ENCODE measurements at regions of chr2 and their contacts with region 1.

Region 1: DNA sequence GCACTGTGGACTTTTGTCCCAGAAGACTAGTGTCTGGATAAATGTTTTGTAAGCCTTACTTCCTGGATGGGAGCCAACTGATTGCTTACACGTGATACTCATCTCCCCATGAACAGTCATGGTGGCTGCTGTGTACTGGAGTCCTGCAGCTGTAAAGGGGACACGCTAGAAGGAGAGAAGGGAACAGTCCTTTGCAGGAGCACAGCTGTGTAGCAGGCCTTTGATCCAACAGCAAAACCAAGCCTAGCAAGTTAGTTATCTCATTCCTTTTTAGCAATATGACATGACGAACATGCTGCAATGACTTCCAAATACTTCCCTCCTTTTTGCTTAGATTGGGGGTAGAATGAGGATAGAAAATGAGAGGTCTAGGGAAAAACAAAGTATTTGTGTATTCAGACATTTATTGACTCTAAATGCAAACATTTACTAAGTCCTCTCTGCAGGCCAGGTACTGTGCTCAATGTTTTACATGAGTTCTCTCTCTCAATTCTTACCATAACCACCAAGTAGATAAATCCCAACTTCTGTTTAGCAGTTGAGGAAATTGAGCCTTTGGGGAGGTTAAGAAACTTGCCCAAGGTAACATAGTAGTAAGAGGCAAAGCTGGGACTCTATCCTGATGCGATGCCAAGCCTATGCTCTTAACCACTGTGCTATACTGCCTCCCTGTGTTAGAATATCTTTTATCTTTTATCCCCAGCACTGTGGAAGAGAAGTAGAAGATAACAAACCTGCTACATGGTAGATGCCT is 55.4 kb upstream of the CD28 start:
- DNase-seq: peak; percentile 44
- H3K4me3 Mint-ChIP-seq: peak overlapping the region; percentile 40
- H3K27ac Mint-ChIP-seq: peak overlapping the region; percentile 87
- H3K4me1 Mint-ChIP-seq: peaks cover 61% of the 10 kb centered on the region
- H3K27me3 Mint-ChIP-seq: no peaks in the 10 kb centered on the region
- CTCF ChIP-seq: peak; percentile 48

Region 2: DNA sequence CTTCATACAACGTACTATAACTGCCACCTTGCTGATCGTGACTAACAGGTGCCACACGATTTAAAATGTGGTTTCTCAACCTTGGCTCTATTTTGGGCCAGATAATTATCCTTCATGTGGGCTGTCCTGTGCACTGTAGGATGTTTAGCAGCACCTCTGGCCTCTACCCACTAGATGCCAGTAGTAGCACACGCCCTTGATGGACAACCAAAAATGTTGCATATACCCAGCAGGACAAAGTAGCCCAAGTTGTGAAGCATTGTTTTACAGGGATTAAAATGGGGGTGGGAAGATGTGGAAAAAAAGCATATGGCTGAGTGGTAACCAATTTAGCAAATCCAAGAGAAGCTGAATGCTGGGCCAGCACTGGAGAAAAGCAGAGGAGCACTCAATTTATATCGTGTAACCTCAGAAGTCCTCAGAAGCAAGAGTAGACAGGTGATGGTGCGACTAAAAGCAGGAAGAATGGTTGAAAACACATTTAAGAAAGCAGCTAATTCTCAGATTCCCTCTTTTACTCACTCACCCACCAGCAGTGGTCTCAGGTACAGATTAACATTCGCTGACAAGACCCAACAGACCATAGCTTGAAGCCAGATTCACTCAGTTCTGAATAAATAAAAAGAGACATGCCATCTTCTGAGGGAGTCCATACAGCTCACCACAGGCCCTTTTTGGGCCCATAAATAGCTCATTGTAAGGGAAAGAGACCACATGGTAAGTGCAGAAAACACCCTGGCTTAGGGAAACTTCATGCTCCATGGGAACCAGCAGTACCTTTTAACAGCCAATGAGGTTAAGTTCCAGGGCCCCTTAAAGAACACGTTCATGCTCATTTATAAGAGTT is 166.5 kb before region 1 on chr2:
- CTCF ChIA-PET with region 1: no interaction called
- intact Hi-C with region 1: loop called (anchors 1 kb)
- DNase-seq: peak; percentile 35
- H3K4me3 Mint-ChIP-seq: no peak overlapping the region
- H3K27ac Mint-ChIP-seq: peak overlapping the region; percentile 46
- H3K4me1 Mint-ChIP-seq: peaks cover 19% of the 10 kb centered on the region
- H3K27me3 Mint-ChIP-seq: no peaks in the 10 kb centered on the region
- CTCF ChIP-seq: peak; percentile 41

Region 3: DNA sequence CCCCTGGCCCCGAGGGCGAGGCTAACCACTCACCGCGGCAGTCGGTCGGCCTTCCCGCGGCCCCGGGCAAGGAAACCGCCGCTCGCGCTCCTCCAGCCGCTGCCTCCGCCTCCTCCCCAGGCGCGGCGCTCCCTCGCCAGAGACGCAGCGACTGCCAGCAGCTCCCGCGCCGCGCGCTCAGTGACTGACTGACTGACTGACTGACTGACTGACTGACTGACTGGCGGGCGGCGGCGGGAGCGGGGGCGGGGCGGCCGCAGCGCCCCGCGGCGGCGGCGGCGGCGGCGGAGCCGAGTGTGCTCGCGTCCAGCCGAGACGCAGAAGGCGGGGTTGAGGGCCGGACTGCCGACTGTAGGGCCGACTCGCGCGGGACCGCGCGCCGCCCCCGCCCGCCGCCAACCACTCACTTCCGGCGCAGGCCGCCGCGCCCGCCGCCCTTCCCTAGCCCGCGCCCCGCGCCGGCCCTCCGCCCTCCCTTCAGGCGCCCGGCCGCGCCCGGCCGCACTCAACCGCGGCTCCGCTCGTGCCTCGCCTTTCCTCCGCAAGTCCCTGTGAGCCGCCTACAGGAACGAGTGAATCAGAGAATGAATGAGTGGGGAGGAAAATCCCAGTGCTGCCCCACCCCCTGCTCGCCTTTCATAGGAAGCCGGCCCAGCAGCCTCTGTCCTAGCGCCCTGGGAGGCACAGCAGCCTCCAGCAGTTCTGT is 115.8 kb before region 1 on chr2 and contains the start of gene RAPH1:
- CTCF ChIA-PET with region 1: interaction called, 3 read pairs
- intact Hi-C with region 1: loop called (anchors 2 kb)
- DNase-seq: peak; percentile 88
- H3K4me3 Mint-ChIP-seq: peak within 1 kb of the TSS; percentile 93
- H3K27ac Mint-ChIP-seq: peak within 1 kb of the TSS; percentile 85
- H3K4me1 Mint-ChIP-seq: peaks cover 19% of the 10 kb centered on the region
- H3K27me3 Mint-ChIP-seq: no peaks in the 10 kb centered on the region
- CTCF ChIP-seq: no peak
- total RNA-seq, gene RAPH1: 126 and 141 TPM in 2 replicates

Region 4: DNA sequence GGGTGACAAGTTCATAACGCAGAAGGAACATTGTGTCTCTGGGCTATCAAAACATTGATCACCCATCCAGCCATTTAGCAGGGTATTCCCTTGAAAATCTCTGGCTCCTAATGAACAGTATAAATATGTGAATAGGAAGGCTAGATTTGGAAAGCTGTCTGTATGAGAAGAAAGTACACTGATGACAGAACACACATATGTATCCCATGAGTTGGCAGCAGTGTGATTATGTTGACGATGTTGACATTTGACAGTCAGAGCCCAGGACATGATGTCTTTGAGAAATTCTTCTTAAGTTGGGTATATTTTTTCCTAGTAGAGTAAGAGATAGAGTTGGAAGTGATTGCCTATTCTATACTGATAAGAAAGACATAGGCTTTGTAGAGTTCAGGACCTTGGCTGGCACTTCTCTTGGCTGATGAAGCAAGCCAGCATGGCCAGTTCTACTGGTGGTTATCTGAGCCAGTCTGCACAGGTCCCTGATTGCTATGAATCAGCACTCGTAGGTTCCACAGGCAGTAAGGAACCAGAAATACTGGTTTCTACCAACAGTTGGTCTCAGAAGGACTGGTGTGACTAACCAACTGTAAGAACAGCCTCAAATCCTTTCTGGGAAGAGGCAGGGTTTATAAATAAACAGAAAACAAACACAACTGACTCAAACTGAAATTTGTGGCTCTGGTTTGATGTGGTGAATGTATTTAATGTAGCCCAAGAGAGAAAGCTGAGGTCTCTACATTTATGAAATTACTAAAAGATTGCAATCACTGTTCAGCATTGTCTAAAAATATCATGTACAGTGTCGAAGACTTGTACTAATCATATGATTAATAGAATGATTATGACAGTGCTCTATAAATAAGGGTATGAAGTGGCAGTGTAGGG is 72.0 kb before region 1 on chr2:
- CTCF ChIA-PET with region 1: interaction called, 3 read pairs
- intact Hi-C with region 1: loop called (anchors 2 kb)
- DNase-seq: peak; percentile 79
- H3K4me3 Mint-ChIP-seq: peak overlapping the region; percentile 57
- H3K27ac Mint-ChIP-seq: peak overlapping the region; percentile 97
- H3K4me1 Mint-ChIP-seq: peaks cover 55% of the 10 kb centered on the region
- H3K27me3 Mint-ChIP-seq: no peaks in the 10 kb centered on the region
- CTCF ChIP-seq: no peak

Region 5: DNA sequence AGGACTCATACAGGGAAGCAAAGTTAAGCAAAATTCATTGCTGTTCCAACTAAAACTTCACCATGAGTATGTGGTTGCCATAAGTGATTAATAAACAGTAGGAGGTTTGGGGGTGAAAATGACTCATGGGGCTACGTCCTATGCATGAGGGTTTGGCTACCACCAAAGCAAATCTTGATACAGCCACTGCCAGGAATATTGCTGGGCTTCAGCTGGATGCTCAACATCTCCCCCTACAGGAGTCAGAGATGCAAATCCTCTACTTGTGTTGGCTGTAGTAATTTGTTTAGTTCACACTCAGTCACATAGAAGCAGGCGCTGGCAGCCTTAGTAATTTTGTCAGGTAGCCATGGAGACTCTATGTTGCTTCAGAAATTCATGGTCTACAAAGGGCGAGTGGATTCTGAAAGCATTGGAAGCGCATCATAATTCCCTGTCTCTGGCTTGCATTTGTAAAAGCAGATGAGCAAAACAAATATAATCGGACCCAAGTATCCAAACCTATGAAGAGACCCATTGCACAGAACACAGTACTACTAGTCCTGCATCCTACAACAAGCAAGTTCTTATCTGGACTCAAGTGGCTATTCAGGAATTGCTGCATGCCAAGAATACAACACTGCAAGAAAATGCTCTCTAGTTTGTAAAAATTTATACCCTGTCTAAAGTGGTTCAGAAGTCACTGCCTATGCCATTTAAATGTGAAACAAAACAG is 131.4 kb after region 1 on chr2:
- CTCF ChIA-PET with region 1: no interaction called
- intact Hi-C with region 1: loop called (anchors 1 kb)
- DNase-seq: peak; percentile 80
- H3K4me3 Mint-ChIP-seq: no peak overlapping the region
- H3K27ac Mint-ChIP-seq: peak overlapping the region; percentile 70
- H3K4me1 Mint-ChIP-seq: peaks cover 30% of the 10 kb centered on the region
- H3K27me3 Mint-ChIP-seq: no peaks in the 10 kb centered on the region
- CTCF ChIP-seq: peak; percentile 79

Region 6: DNA sequence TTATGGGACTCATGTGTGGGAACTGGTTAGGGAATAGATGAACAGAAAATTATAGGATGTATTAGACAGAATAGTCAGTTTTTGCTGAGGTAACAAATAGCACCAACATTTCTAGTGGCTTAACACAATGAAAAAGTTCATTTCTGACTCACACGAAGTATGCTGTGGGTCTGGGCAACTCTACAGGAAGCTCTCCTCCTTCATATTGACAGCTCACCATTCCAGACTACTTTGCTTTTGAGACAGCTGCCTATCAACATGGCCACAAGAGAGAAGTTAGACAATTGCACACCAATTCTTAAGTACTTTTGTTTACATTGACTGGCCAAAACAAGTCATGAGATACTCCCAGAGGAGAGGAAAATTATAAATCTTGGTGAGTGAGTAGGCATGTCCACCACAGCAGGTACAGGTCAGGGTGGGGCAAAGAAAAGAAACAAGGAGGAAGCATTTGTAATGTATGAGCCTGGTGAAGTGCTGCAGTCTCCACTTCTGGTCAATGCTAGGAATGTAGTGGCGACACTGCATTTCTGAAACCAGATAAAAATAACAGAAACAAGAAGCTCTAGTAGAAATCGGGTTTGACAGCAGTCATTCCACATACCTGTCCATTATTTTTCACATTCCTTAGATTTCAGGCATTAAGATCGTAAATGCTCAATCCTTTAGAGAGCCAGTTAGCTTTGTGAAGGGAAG is 427.1 kb after region 1 on chr2:
- CTCF ChIA-PET with region 1: no interaction called
- intact Hi-C with region 1: no loop called
- DNase-seq: no peak
- H3K4me3 Mint-ChIP-seq: no peak overlapping the region
- H3K27ac Mint-ChIP-seq: no peak overlapping the region
- H3K4me1 Mint-ChIP-seq: no peaks in the 10 kb centered on the region
- H3K27me3 Mint-ChIP-seq: peaks cover 66% of the 10 kb centered on the region
- CTCF ChIP-seq: no peak